ENCODE measurements at regions of chr13 and their contacts with region 1.

Region 1: GRCh38 chr13:59846843-59847620 is 316.7 kb downstream of the DIAPH3 start:
- DNase-seq: no peak
- H3K4me3 ChIP-seq: no peak overlapping the region
- CTCF ChIP-seq: no peak
- POLR2A ChIP-seq: no peak

Region 2: GRCh38 chr13:59867867-59868266 is 20.8 kb after region 1 on chr13:
- intact Hi-C with region 1: loop called (anchors 2 kb)
- DNase-seq: no peak
- H3K4me3 ChIP-seq: no peak overlapping the region
- CTCF ChIP-seq: no peak
- POLR2A ChIP-seq: no peak

Measured in lower leg skin (tissue), 4 donors.